Activated naive CD8-positive, alpha-beta T cell treated with anti-CD3 and anti-CD28 coated beads, Interleukin-2, amount 10 ng/mL, durations not matched to agents 7 days and 5 days (primary cell): ENCODE measurements at regions of chr1 and their contacts with region 1.

Region 1: GRCh38 chr1:175208773-175209492 is 16.4 kb upstream of the KIAA0040 start:
- DNase-seq: peak; percentile 57
- ATAC-seq: peak; percentile 88
- H3K4me3 Mint-ChIP-seq: peak overlapping the region; percentile 78
- H3K27ac Mint-ChIP-seq: peak overlapping the region; percentile 97
- H3K4me1 Mint-ChIP-seq: peaks cover 40% of the 10 kb centered on the region
- H3K27me3 Mint-ChIP-seq: no peaks in the 10 kb centered on the region

Region 2: DNA sequence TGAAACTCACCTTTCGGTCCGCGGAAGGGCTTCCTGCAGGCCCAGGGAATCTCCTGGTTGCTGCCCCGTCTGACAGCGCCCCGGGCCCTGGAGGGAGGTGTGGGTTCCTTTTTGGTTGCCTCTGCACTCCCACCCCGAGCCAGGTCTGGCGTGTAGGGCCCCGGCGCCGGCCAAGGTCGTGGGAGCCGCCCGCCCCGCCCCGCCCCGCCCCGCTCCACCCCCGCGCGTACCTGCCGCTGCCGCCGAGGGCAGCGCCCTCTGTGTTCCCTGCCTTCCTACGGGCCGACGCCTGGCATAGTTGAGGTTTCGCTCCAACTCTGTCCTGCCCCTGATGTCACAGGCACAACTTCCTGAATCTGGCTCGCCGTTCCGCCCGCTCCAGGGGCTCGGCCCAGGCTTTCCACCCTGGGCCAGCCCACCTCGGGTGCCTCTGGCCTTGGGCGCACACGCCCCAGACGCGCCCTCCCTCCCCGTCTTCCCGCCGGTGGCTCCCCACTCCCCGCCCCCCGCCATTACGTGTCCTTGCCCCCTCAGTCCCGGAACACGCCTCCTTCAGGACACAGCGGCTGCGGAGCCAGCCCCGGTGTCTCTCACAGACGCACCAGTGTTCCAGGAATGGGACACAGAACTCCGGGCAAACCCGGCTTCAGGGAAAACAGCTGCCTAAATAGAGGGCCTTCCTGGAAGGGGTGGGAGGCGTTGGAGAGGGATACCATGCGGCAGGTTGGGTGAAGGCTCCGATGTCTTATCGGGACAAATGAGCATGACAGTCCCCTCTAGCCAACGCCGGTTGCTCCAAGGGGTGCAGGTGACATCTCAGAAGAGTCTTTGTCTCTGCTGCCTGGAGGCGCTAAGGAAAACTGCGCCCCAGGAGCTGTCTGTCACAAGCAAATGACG is 16.1 kb before region 1 on chr1 and contains the start of gene KIAA0040:
- POLR2A ChIA-PET with region 1: interaction called, 45 read pairs
- DNase-seq: peak; percentile 75
- ATAC-seq: peak; percentile 65
- H3K4me3 Mint-ChIP-seq: peak within 1 kb of the TSS; percentile 94
- H3K27ac Mint-ChIP-seq: peak within 1 kb of the TSS; percentile 88
- H3K4me1 Mint-ChIP-seq: peaks cover 51% of the 10 kb centered on the region
- H3K27me3 Mint-ChIP-seq: peaks cover 1% of the 10 kb centered on the region
- total RNA-seq, gene KIAA0040: 49.8 to 57.1 TPM

Region 3: GRCh38 chr1:175237389-175237788 is 28.5 kb after region 1 on chr1:
- POLR2A ChIA-PET with region 1: no interaction called
- DNase-seq: no peak
- ATAC-seq: no peak
- H3K4me3 Mint-ChIP-seq: peak overlapping the region; percentile 50
- H3K27ac Mint-ChIP-seq: peak overlapping the region; percentile 62
- H3K4me1 Mint-ChIP-seq: peaks cover 23% of the 10 kb centered on the region
- H3K27me3 Mint-ChIP-seq: no peaks in the 10 kb centered on the region